ENCODE measurements at regions of chr12 and their contacts with region 1.

Region 1: GRCh38 chr12:121793838-121794533 is 498 bp upstream of the RHOF start:
- DNase-seq: peak; percentile 98
- H3K4me3 Mint-ChIP-seq: peak overlapping the region; percentile 88
- H3K27ac Mint-ChIP-seq: peak overlapping the region; percentile 94
- H3K4me1 Mint-ChIP-seq: peaks cover 58% of the 10 kb centered on the region
- H3K27me3 Mint-ChIP-seq: no peaks in the 10 kb centered on the region

Region 2: DNA sequence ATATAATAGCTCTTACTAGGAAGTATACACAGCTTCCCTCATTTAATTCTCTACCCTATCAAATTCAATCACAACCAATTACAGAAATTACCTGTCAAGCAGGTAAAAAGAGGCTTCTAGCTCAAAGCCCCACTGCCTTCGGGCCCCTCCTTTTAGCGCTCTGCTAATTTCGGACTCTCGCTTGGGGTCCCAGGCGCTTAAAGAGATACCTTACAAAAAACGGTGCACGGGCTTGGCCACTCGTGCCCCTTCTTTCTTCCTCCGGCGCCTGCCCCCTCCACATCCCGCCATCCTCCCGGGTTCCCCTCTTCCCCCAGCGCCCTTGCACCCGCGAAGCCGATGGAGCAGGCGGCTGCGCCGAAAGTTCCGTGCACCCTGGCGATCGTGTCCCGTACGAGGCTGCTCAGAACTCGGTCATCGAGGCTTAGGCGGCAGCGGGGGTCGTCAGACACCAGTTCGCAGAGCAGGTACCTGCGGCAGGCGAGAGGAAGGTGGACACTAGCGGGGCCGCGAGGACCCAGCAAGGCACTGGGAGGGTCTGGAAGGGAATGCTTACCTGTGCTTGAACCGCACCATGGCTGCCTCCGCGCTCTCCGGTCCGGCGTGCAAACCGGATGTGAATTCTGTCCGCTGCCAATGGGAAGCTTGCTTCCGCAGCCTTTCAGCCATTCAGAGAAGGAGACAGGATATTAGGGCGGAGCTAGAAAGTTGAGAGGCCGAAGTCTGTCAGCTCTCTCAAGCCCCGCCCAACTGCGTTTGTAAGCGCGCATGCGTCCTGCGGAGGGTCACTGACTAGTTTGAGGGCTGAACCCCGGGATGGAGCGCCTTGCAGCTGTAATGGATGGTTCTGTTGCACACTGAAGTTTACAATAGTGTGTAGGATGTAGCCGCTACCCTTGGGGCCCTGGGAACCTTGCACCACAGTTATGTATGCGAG is 1212.9 kb before region 1 on chr12 and contains the start of gene POP5:
- CTCF ChIA-PET with region 1: no interaction called
- POLR2A ChIA-PET with region 1: no interaction called
- intact Hi-C with region 1: loop called (anchors 5 kb)
- DNase-seq: peak; percentile 97
- H3K4me3 Mint-ChIP-seq: peak within 1 kb of the TSS; percentile 96
- H3K27ac Mint-ChIP-seq: peak within 1 kb of the TSS; percentile 86
- H3K4me1 Mint-ChIP-seq: peaks cover 33% of the 10 kb centered on the region
- H3K27me3 Mint-ChIP-seq: no peaks in the 10 kb centered on the region
- total RNA-seq, gene POP5: 54.1 to 55.7 TPM

Region 3: GRCh38 chr12:121560392-121561008 is 233.5 kb before region 1 on chr12:
- CTCF ChIA-PET with region 1: no interaction called
- POLR2A ChIA-PET with region 1: no interaction called
- intact Hi-C with region 1: no loop called
- DNase-seq: no peak
- H3K4me3 Mint-ChIP-seq: no peak overlapping the region
- H3K27ac Mint-ChIP-seq: peak overlapping the region; percentile 23
- H3K4me1 Mint-ChIP-seq: peaks cover 15% of the 10 kb centered on the region
- H3K27me3 Mint-ChIP-seq: no peaks in the 10 kb centered on the region

Region 4: DNA sequence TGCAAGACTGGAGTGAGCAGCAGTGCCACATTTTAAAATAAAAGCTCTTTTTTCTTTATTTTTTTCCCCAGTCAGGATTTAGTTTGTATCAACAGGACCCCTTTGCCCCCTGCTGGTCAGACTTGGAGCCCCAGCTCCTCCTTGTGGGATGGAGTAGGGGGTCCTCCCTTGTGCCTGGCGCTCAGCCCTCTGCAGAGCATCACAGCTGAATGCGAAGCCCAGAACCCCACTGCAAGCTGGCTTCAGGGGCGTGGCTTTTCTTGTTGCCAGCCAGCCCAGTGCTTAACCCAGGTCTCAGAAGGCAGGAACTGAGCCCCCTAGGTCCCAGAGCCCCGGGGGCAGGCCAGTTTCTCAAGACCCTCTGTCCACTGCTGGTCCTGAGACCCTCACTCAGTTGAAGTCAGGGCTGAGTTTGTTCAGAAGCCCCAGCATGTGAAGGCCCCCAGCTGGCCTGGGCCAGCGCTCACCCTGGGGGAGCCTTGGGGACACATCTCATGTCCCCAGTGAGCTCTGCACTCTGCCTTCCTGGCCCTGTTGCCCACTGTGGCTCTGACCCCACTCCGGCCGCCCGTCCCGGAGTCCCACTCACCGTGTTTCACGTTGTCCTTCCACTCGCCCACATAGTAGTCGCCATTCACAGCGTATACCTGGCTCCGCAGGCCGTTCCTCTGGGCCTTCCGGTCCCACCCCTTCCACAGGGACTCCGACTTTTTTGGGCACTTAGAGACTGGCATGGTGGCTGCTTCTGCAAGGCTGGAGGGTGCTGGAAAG is 125.1 kb before region 1 on chr12:
- CTCF ChIA-PET with region 1: interaction called, 12 read pairs
- POLR2A ChIA-PET with region 1: interaction called, 4 read pairs
- intact Hi-C with region 1: no loop called
- DNase-seq: peak; percentile 68
- H3K4me3 Mint-ChIP-seq: no peak overlapping the region
- H3K27ac Mint-ChIP-seq: peak overlapping the region; percentile 62
- H3K4me1 Mint-ChIP-seq: peaks cover 51% of the 10 kb centered on the region
- H3K27me3 Mint-ChIP-seq: no peaks in the 10 kb centered on the region

Region 5: GRCh38 chr12:121719926-121720414 is 74.0 kb before region 1 on chr12:
- CTCF ChIA-PET with region 1: interaction called, 17 read pairs
- POLR2A ChIA-PET with region 1: no interaction called
- intact Hi-C with region 1: no loop called
- DNase-seq: no peak
- H3K4me3 Mint-ChIP-seq: no peak overlapping the region
- H3K27ac Mint-ChIP-seq: no peak overlapping the region
- H3K4me1 Mint-ChIP-seq: no peaks in the 10 kb centered on the region
- H3K27me3 Mint-ChIP-seq: no peaks in the 10 kb centered on the region

Region 6: DNA sequence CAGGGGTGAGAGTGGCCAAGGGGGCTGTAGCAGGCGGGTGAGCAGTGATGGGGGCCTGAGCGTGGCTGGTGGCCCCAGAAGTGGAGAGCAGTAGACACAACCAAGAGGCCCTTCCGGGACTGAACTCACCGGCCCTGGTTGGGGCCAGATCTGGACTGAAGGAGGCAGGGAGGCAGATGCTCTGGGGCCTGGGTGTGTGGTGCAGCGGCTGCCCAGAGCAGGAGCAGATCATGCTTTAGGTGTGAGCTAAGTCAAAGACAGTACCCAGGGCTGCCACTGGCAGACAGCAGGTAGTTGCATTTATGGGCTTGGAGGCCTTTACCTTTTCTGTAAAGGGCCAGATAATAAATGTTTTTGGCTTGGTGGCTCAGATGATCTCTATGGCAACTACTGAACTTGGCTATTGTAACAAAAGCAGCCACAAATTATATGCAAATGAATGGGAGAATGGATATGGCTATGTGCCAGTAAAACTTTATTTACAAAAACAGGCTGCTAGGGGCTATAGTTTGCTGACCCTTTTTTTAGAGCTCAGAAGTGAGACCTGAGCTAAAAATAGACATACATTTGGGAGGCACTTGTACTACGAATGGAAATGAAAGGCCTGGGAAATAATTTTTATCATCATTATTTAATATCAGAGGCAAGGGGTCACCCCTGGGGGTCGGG is 35.4 kb after region 1 on chr12:
- CTCF ChIA-PET with region 1: interaction called, 15 read pairs
- POLR2A ChIA-PET with region 1: no interaction called
- intact Hi-C with region 1: no loop called
- DNase-seq: no peak
- H3K4me3 Mint-ChIP-seq: no peak overlapping the region
- H3K27ac Mint-ChIP-seq: no peak overlapping the region
- H3K4me1 Mint-ChIP-seq: peaks cover 13% of the 10 kb centered on the region
- H3K27me3 Mint-ChIP-seq: no peaks in the 10 kb centered on the region

Region 7: GRCh38 chr12:121888478-121889266 is 94.7 kb after region 1 on chr12 and contains the start of gene PSMD9:
- CTCF ChIA-PET with region 1: interaction called, 117 read pairs
- POLR2A ChIA-PET with region 1: interaction called, 3 read pairs
- intact Hi-C with region 1: loop called (anchors 1 kb)
- DNase-seq: peak; percentile 99
- H3K4me3 Mint-ChIP-seq: peak within 1 kb of the TSS; percentile 100
- H3K27ac Mint-ChIP-seq: peak within 1 kb of the TSS; percentile 94
- H3K4me1 Mint-ChIP-seq: peaks cover 39% of the 10 kb centered on the region
- H3K27me3 Mint-ChIP-seq: no peaks in the 10 kb centered on the region
- total RNA-seq, gene PSMD9: 60.7 to 64.1 TPM

Region 8: DNA sequence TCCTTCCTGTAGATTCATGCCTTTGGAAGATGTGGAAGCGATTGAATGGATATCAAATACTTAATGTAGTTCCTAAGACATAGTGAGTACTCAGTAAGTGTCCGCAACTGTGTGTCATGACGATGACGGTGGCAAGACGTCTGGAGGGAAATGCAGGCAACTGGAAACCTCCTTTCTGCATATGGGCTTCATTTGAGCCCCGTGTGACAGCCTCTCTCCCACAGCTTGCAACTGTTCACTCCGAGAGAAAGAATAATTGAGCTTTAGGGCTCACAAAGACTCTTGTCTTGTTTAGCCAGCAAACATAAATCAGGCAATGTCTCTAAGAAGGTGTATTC is 131.3 kb after region 1 on chr12:
- CTCF ChIA-PET with region 1: no interaction called
- POLR2A ChIA-PET with region 1: no interaction called
- intact Hi-C with region 1: no loop called
- DNase-seq: no peak
- H3K4me3 Mint-ChIP-seq: no peak overlapping the region
- H3K27ac Mint-ChIP-seq: no peak overlapping the region
- H3K4me1 Mint-ChIP-seq: no peaks in the 10 kb centered on the region
- H3K27me3 Mint-ChIP-seq: no peaks in the 10 kb centered on the region

Region 9: GRCh38 chr12:122078141-122079032 is 284.4 kb after region 1 on chr12 and contains the start of gene MLXIP:
- CTCF ChIA-PET with region 1: no interaction called
- POLR2A ChIA-PET with region 1: no interaction called
- intact Hi-C with region 1: loop called (anchors 5 kb)
- DNase-seq: peak; percentile 93
- H3K4me3 Mint-ChIP-seq: peak within 1 kb of the TSS; percentile 83
- H3K27ac Mint-ChIP-seq: peak within 1 kb of the TSS; percentile 8
- H3K4me1 Mint-ChIP-seq: peaks cover 45% of the 10 kb centered on the region
- H3K27me3 Mint-ChIP-seq: no peaks in the 10 kb centered on the region
- total RNA-seq, gene MLXIP: 17.5 to 19.6 TPM

Measured in activated CD4-positive, alpha-beta memory T cell treated with anti-CD3 and anti-CD28 coated beads for 36 hours (primary cell).